ENCODE measurements at regions of chr3 and their contacts with region 1.

Region 1: DNA sequence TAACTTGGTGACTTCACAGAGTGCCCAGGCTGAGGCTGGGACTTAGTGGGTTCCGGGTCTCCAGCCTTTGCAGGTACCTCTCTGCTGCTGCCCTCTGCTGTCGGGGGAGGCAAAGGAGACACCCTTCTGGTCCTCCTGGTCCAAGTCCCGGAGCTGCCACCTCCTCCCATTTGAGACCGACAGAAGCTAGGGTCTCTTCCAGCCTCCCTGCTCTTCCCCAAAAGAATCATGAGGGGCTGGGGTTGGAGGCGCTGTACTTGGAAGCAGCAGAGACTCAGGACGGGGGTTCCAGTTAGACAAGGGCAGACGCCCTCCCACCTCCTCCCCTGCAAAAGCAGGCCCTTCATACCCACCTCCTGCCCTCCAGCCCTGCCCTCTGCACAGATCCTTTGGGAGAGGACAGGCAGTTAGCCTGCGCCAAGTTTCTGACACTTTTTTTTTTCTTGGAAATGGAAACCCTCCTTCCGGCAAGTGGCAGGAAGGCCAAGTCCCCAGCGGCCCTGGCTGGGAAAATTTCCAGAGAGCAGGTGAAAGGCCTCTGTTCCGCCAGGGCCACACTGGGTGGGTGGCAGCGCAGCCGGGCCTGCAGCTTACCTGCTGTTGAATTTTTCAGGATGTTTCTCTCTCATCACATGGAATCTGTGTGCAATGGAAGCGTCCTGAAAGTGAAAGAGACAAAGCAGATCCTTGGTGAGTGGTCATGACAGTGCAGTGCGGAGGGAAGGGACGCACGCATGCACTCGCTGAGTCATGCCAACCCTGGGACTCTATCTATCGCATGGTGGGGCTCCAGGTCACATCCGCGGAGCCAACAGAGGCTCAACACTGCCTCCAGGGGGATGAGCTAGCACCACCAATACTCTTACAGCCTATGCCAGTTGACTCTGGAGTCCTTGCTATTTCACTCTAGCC is 119.9 kb downstream of the DGKG start:
- DNase-seq: peak; percentile 92 to 97 (median 96)
- H3K4me3 ChIP-seq: peak overlapping the region in 5 of 7 experiments; percentile 27 to 76 (median 56)
- H3K27ac ChIP-seq: no peak overlapping the region
- H3K4me1 ChIP-seq: peaks cover 0 to 21% (median 15%) of the 10 kb centered on the region in 4 experiments
- H3K27me3 ChIP-seq: no peaks in the 10 kb centered on the region

Region 2: DNA sequence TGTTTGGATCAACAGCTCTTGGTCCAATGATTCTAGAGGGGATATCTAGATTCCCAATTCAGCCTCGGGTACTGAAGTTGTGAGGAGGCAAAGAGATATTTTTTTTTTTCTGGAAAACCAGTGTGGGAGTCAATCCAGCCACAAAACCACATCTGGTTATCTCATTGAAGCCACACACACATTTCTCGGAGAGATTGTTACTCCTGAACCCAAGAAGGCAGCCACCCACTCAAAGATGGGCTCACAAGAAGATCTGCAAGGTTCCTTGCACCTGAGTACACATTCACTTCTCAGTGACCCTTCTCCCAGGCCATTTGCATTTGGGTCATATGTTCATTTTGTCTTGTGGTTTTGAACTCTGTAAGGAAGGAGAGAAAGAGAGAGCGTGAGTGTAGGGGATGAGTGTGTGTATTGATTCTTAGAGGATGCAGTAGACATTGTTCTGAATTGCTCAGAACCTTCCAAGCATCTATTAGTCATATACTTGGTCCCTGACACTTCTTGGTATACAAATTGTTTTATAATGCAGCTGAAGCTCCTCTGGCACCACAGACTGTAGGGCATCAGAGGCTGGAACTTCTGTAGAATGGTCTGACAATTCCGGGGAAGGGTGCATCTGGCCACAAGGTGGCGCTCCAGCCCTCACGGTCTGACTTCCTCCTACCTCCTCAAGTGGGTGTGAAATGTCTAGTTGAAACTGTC is 265.0 kb before region 1 on chr3:
- CTCF ChIA-PET with region 1: interaction called, 82 read pairs
- POLR2A ChIA-PET with region 1: no interaction called
- DNase-seq: peak; percentile 78 to 89 (median 83)
- H3K4me3 ChIP-seq: no peak overlapping the region
- H3K27ac ChIP-seq: no peak overlapping the region
- H3K4me1 ChIP-seq: peaks cover 0 to 10% (median 4%) of the 10 kb centered on the region in 4 experiments
- H3K27me3 ChIP-seq: no peaks in the 10 kb centered on the region

Region 3: GRCh38 chr3:185988080-185988815 is 253.9 kb before region 1 on chr3:
- CTCF ChIA-PET with region 1: interaction called, 82 read pairs
- POLR2A ChIA-PET with region 1: no interaction called
- DNase-seq: no peak
- H3K4me3 ChIP-seq: no peak overlapping the region
- H3K27ac ChIP-seq: no peak overlapping the region
- H3K4me1 ChIP-seq: peaks cover 0 to 5% (median 2%) of the 10 kb centered on the region in 4 experiments
- H3K27me3 ChIP-seq: peaks cover 0 to 3% (median 0%) of the 10 kb centered on the region in 5 experiments

Region 4: DNA sequence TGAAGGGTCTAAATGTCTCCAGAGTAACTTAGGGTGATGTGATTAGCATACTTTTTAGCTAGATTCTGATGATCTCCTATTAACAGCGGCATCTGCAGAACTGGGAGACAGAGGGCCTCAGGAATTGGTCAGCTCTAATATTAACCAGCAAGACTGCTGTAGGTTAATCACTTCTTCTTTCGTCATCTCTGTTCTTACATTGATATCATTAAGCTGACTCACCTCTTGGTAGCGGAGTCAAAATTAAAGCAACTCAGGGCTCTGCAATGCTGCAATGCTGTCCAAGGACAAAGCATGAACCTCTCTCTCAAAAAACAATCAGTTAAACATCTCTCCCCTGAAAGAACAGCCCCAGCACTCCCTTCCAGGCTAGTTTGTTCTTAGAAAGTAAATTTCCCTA is 246.8 kb before region 1 on chr3:
- CTCF ChIA-PET with region 1: interaction called, 12 read pairs
- POLR2A ChIA-PET with region 1: no interaction called
- DNase-seq: no peak
- H3K4me3 ChIP-seq: no peak overlapping the region
- H3K27ac ChIP-seq: no peak overlapping the region
- H3K4me1 ChIP-seq: no peaks in the 10 kb centered on the region
- H3K27me3 ChIP-seq: peaks cover 0 to 3% (median 0%) of the 10 kb centered on the region in 5 experiments

Region 5: GRCh38 chr3:186330772-186331460 is 88.8 kb after region 1 on chr3:
- CTCF ChIA-PET with region 1: no interaction called
- POLR2A ChIA-PET with region 1: no interaction called
- DNase-seq: no peak
- H3K4me3 ChIP-seq: no peak overlapping the region
- H3K27ac ChIP-seq: no peak overlapping the region
- H3K4me1 ChIP-seq: peaks cover 0 to 1% (median 0%) of the 10 kb centered on the region in 4 experiments
- H3K27me3 ChIP-seq: no peaks in the 10 kb centered on the region

Region 6: GRCh38 chr3:186534113-186534669 is 292.0 kb after region 1 on chr3:
- CTCF ChIA-PET with region 1: interaction called, 37 read pairs
- POLR2A ChIA-PET with region 1: no interaction called
- DNase-seq: peak; percentile 50 to 93 (median 89)
- H3K4me3 ChIP-seq: no peak overlapping the region
- H3K27ac ChIP-seq: no peak overlapping the region
- H3K4me1 ChIP-seq: peaks cover 25 to 64% (median 50%) of the 10 kb centered on the region in 4 experiments
- H3K27me3 ChIP-seq: no peaks in the 10 kb centered on the region